ENCODE measurements at regions of chr2 and their contacts with region 1.

Region 1: GRCh38 chr2:145411493-145411892 is 891.6 kb upstream of the ZEB2 start:
- DNase-seq: peak; percentile 16
- H3K4me3 Mint-ChIP-seq: no peak overlapping the region
- H3K27ac Mint-ChIP-seq: no peak overlapping the region
- H3K4me1 Mint-ChIP-seq: peaks cover 9% of the 10 kb centered on the region
- H3K27me3 Mint-ChIP-seq: peaks cover 6% of the 10 kb centered on the region

Region 2: DNA sequence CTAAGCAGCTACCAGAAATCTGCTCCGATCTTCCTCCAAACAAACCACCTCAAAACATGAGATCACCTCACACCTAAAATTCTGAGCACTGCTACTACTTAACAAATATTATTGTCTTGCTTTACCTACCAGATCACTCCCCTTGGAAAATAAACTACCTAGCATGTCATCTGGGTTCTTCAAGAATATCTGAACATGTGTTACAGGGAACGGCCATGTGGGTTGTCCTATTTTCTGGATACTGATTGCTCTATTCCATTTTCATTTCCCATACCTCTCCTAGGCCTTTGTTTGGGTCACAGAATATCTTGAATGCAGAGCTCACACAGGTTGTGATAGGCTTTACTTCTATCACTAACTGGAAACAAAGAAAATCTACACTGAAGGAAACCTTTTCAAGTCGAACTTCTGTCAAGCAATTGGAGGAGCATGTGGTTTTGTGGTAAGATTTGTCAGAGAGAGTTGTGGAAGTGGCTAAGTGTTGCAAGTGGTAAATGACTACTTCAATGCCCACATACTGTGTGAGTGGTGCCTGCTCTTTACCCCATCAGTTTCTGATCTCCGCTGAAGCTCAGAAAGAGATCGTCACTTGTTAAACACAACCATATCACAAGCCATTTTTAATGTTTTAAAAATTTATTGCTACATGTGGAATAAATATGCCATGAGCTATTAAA is 152.5 kb before region 1 on chr2:
- CTCF ChIA-PET with region 1: no interaction called
- intact Hi-C with region 1: no loop called
- DNase-seq: peak; percentile 4
- H3K4me3 Mint-ChIP-seq: no peak overlapping the region
- H3K27ac Mint-ChIP-seq: no peak overlapping the region
- H3K4me1 Mint-ChIP-seq: peaks cover 2% of the 10 kb centered on the region
- H3K27me3 Mint-ChIP-seq: peaks cover 3% of the 10 kb centered on the region

Region 3: GRCh38 chr2:145323512-145323911 is 88.0 kb before region 1 on chr2:
- CTCF ChIA-PET with region 1: no interaction called
- intact Hi-C with region 1: loop called (anchors 1 kb)
- DNase-seq: no peak
- H3K4me3 Mint-ChIP-seq: no peak overlapping the region
- H3K27ac Mint-ChIP-seq: no peak overlapping the region
- H3K4me1 Mint-ChIP-seq: peaks cover 9% of the 10 kb centered on the region
- H3K27me3 Mint-ChIP-seq: no peaks in the 10 kb centered on the region

Region 4: GRCh38 chr2:145399131-145399530 is 12.4 kb before region 1 on chr2:
- CTCF ChIA-PET with region 1: no interaction called
- intact Hi-C with region 1: no loop called
- DNase-seq: no peak
- H3K4me3 Mint-ChIP-seq: no peak overlapping the region
- H3K27ac Mint-ChIP-seq: no peak overlapping the region
- H3K4me1 Mint-ChIP-seq: no peaks in the 10 kb centered on the region
- H3K27me3 Mint-ChIP-seq: no peaks in the 10 kb centered on the region

Region 5: GRCh38 chr2:145484443-145485097 is 73.1 kb after region 1 on chr2:
- CTCF ChIA-PET with region 1: no interaction called
- intact Hi-C with region 1: no loop called
- DNase-seq: no peak
- H3K4me3 Mint-ChIP-seq: no peak overlapping the region
- H3K27ac Mint-ChIP-seq: no peak overlapping the region
- H3K4me1 Mint-ChIP-seq: no peaks in the 10 kb centered on the region
- H3K27me3 Mint-ChIP-seq: no peaks in the 10 kb centered on the region

Region 6: DNA sequence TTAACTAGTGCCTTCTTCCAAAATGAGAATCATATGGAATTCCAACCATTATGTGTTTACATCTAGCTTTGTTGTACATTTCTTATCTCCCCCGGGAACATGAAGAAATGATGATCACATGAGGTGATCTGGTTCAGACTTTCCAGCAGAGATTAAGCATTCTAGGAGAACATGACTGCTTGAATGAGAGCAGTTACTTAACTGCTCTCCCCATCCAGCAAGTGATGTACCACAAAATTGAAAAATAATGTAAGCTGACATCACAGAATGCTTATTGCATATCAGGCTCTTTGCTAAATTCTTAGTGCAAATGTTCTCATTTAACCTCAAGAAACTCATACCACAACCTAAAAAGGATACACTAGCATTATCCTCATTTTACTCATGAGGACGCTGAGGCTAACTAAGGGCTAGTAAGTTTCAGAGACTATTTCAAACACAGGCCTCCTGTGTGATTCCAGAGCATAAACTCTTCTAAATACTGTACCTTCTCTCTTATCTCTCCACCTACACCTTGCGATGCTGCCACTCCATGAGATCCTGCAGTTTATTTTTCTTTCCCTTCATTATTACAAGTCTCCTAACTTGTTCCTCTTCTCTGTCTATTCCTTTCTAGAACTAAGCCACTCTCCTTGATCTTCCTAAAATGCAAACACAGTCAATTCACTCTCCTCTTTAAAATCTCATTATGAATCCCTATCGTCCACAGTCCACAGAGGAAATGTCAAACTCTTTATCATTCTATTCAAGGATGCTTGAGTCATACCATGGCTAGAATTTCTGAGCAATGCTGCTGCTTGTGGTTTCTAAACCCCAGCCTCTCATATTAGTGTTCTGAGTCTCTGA is 333.3 kb after region 1 on chr2:
- CTCF ChIA-PET with region 1: no interaction called
- intact Hi-C with region 1: loop called (anchors 10 kb)
- DNase-seq: no peak
- H3K4me3 Mint-ChIP-seq: no peak overlapping the region
- H3K27ac Mint-ChIP-seq: no peak overlapping the region
- H3K4me1 Mint-ChIP-seq: peaks cover 8% of the 10 kb centered on the region
- H3K27me3 Mint-ChIP-seq: no peaks in the 10 kb centered on the region

Measured in activated naive CD4-positive, alpha-beta T cell treated with anti-CD3 and anti-CD28 coated beads for 36 hours (primary cell).